AG04449 (cell line): ENCODE measurements at regions of chr7 and their contacts with region 1.

Region 1: DNA sequence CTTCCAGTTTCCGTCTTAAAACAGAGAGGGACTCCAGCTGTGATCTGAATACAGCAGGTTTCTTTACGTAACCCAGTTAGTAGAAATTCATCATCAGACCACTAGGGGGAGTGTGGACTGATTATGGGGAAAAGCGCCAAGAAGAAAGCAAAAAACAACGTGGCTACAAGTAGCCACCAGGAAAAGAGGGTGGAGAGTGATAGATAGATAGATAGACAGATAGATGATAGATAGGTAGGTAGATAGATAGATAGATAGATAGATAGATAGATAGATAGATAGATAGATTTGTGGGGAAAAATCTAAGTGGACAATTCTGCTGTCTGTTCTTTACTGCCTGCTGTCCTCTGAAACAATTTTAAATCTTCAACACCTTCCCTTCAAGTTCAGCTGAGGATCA is 12.7 kb upstream of the AKR1B10 start:
- DNase-seq: peak; percentile 31
- H3K4me3 ChIP-seq: no peak overlapping the region
- CTCF ChIP-seq: peak; percentile 69

Region 2: DNA sequence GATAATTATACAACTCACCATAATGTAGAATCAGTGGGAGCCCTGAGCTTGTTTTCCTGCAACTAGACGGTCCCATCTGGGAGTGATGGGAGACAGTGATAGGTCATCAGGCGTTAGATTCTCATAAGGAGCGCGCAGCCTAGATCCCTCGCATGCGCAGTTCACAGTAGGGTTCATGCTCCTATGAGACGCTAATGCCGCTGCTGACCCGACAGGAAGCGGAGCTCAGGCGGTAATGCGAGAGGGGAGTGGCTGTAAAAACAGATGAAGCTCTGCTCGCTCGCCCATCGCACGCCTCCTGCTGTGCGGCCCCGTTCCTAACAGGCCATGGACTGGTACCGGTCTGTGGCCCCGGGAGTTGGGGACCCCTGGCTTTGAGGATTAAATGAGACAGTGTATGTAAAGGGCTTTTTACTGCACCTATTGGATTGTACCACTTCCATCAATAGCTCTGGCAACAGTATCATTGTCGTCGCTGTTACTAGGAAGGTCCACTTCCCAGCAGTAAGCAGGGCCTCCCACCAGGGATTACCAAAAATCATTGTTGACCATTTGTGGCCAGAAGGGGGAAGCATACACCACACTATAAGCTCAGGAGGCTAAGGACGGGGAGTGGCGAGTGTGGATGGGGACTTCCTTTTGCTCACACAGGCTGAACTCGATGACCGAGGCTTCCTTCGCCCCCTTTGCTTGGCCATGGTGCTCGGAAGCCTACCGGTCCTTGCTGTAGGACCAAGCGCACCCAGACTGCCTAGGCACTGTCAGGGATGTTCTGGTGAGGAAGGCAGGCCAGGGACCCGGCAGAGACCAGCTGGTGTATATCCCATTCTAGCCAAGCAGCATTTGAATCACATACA is 82.1 kb before region 1 on chr7:
- CTCF ChIA-PET with region 1: interaction called, 417 read pairs
- POLR2A ChIA-PET with region 1: interaction called, 4 read pairs
- DNase-seq: no peak
- H3K4me3 ChIP-seq: peak overlapping the region; percentile 53
- CTCF ChIP-seq: peak; percentile 74

Region 3: DNA sequence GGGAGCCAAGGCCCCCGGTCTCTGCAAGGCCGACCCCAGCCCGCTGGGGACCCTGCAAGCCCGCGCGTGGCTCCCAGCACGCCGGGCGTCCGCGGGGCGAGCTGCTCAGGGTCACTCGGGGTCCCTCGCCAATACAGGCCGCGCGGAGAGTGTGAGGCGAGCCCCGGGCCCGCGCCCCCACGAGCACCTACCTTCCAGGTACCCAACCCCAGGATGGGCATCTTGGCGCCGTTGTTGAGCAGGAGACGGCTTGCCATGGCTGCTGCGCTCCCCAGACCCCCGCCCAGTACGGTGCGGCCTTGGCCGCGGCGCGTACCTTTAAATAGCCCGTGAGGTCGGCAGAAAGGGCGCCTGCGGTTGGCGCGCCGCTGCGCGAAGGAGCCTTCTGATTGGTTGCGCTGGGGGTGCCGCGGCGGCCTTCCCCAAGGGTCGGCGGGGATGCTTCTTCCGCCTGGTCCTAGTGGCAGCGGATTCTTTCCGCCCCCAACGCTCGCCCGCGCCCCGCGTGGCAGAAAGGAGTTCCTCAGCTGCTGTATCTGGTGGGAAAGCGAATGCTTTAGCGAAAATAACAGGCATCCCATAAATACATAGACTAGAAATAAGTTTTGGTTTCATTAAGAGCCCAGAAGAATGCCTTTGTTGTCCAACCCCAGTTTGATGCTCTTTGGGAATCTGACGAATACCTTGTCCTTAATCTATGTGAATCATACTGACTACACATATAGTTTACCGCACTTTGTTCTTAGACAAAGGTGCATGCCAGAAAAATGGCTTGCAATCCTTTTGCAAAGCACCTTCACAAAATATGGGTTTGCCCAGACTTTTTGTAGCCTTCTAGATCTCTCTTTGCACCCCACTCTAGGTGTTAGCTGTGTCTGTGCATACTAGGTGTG is 55.6 kb before region 1 on chr7 and contains the start of gene AKR1B1:
- CTCF ChIA-PET with region 1: interaction called, 55 read pairs
- POLR2A ChIA-PET with region 1: no interaction called
- DNase-seq: peak; percentile 45
- H3K4me3 ChIP-seq: peak within 1 kb of the TSS; percentile 91
- CTCF ChIP-seq: peak; percentile 85

Region 4: GRCh38 chr7:134502463-134503371 is 11.9 kb before region 1 on chr7:
- CTCF ChIA-PET with region 1: interaction called, 18 read pairs
- POLR2A ChIA-PET with region 1: no interaction called
- DNase-seq: no peak
- H3K4me3 ChIP-seq: no peak overlapping the region
- CTCF ChIP-seq: no peak

Region 5: DNA sequence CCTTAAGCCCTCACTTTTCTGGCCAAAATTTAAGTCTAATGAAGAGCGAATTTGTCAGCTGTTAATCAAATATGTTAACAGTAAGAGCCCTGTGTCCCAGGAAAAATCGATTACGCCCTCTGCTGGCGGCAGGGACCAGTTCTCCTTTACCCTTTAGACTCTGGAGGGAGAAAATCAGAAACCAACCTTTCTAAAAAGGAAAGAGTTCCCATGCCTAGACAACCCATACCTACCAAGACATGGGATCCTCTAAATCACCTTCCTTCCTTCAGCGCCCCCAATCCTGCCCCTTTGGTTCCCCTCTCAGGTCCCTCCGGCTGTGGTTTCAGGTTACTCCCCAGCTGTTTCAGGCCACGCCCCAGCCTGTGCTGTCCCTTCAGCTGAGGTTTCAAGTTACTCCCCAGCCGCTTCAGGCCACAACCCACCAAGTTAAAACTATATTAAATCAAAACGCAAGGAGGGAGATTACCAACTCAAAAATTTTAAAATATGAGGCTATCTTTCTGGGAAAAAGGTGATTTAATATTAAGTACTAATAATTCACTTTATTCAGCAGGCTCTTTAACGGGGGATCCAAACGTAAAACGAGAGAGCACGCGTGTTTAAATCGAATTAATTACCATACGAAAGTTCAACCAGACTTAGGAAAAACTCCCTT is 32.9 kb after region 1 on chr7:
- CTCF ChIA-PET with region 1: interaction called, 74 read pairs
- POLR2A ChIA-PET with region 1: no interaction called
- DNase-seq: no peak
- H3K4me3 ChIP-seq: peak overlapping the region; percentile 57
- CTCF ChIP-seq: peak; percentile 65

Region 6: DNA sequence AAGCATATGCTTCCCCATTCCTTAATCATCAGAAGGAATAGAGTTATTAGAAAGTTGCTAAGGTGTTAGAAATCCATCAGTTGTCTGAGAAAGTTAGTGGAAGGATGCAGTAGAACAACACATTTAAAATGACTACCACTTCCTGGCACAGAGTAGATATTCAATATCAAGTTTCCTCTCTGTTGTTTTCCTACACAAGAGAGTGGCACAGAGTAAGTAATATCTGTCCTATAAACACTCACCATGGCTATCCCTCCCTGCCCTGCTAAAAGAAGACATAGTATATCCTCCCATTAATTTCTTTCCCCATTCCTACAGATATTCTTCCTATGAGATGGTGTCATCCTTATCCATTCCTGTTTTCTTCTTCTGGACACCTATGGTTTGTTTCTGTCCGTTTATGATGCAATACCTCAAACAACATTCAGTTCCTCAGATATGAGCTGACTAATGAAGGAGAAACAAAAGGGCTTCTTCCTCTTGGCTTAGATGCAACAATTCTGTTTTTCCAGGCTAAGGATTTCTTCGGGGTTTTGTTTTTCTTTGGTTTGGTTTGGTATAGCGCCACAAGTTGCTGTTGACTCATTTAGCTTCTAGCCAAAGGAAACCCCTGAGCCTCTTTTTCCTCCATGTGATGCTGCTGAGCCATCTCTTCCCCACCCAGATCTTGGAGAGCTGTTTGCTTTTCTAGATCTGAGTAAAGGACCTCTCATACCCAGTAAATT is 99.1 kb after region 1 on chr7:
- CTCF ChIA-PET with region 1: interaction called, 145 read pairs
- POLR2A ChIA-PET with region 1: no interaction called
- DNase-seq: peak; percentile 94
- H3K4me3 ChIP-seq: no peak overlapping the region
- CTCF ChIP-seq: no peak